Heart right ventricle (tissue), 16 donors: ENCODE measurements at regions of chr6 and their contacts with region 1.

Region 1: DNA sequence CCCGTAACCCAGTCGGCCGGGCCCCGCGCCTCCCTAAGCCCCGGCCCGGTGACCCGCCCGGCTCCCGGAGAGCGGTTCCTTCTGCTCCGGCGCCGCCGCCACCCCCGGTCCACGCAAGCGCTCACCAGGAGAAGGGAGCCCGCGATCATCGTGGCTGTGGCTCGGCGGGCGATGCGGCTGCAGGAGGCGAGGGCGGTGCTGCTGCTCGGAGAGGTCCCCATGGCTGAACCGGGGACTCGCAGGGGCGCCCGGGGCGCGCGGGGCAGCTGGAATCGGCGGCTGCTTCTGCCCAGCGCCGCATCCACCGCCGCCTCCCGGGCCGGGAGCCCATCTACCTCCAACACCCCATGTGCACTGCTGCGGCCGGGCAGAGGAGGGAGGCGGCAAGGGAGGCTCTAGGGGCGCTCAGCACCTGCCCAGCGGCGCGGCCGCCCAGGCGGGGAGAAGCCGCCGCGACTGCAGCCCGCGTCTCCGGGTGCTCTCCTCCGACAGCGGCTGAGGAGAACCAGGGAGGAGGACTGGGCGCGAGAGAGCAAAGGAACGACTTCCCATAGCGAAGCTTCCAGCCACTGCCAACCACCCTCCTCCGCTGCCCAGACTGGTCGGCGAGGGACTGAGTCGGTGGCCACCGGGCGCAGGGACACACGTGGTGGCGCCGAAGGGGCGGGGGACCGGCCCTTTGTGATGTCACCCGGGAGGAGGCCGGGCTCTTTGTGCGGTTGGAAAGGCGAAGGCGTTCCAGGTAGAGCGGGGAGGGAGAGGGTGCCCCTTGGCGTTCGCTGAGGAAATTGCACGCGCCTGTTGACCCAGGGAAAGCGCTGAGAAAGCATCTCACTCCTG is at the start of gene TNFRSF21:
- DNase-seq: peak; percentile 90 to 92
- ATAC-seq: peak; percentile 98 to 100 (median 99)
- H3K4me3 ChIP-seq: peak within 1 kb of the TSS; percentile 56 to 83 (median 78)
- H3K27ac ChIP-seq: peak within 1 kb of the TSS; percentile 22 to 81 (median 73)
- H3K4me1 ChIP-seq: peaks cover 0 to 25% (median 10%) of the 10 kb centered on the region in 9 donors
- H3K27me3 ChIP-seq: peaks cover 0 to 61% (median 40%) of the 10 kb centered on the region in 7 donors
- CTCF ChIP-seq: peak; percentile 83 to 99 (median 95)
- total RNA-seq, gene TNFRSF21: 3.8 to 12.8 (median 6.0) TPM

Region 2: DNA sequence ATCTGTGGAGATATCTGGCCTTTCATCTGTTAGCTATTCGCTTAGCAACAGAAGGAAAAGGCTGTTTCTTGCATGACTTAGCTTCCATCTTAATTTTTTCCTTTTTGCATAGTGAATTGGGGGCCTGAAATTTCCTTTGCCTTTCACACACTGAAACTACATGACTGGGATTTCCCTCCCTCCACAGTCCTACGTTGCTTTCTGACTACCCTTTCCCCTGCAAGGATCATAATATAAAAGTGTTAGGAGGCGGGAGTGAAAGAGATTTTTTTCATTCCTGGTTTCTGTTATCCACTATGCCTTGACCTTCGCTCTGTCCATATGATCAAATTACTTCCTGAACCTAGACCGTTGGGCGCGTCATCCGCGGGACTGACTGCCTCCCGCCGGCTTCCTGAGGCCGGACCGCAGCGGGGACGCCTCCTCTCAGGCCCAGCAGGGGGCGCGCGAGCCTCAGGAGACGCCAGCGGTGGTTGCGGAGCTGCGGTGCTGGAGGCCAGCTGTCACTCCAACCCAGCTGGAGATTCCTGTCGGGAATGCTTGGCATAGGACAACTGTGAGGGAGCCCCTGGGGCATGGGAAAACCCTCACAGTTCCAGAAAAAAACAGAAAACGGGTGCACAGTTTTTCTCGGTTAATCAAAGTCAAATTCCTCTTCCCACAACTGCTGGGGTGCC is 460.7 kb before region 1 on chr6:
- intact Hi-C with region 1: loop called in 6 of 10 experiments (anchors 5 to 10 kb)
- DNase-seq: peak; percentile 83 to 88
- ATAC-seq: peak; percentile 90 to 97 (median 94)
- H3K4me3 ChIP-seq: peak overlapping the region in 4 of 10 donors; percentile 17 to 32 (median 22)
- H3K27ac ChIP-seq: peak overlapping the region in 2 of 10 donors; percentile 21 to 51
- H3K4me1 ChIP-seq: peaks cover 4 to 54% (median 38%) of the 10 kb centered on the region in 9 donors
- H3K27me3 ChIP-seq: no peaks in the 10 kb centered on the region
- CTCF ChIP-seq: peak; percentile 93 to 99 (median 99)

Region 3: GRCh38 chr6:47009566-47009965 is 299.9 kb before region 1 on chr6:
- intact Hi-C with region 1: loop called in 1 of 10 experiments (anchors 5 kb)
- DNase-seq: no peak
- ATAC-seq: no peak
- H3K4me3 ChIP-seq: no peak overlapping the region
- H3K27ac ChIP-seq: no peak overlapping the region
- H3K4me1 ChIP-seq: no peaks in the 10 kb centered on the region
- H3K27me3 ChIP-seq: peaks cover 0 to 12% (median 0%) of the 10 kb centered on the region in 7 donors
- CTCF ChIP-seq: peak in 4 of 9 donors; percentile 9 to 43 (median 24)

Region 4: GRCh38 chr6:47242483-47243386 is 66.8 kb before region 1 on chr6:
- intact Hi-C with region 1: loop called in 3 of 10 experiments (anchors 5 to 10 kb)
- DNase-seq: peak; percentile 86 to 88
- ATAC-seq: peak; percentile 89 to 99 (median 95)
- H3K4me3 ChIP-seq: no peak overlapping the region
- H3K27ac ChIP-seq: peak overlapping the region in 6 of 10 donors; percentile 26 to 59 (median 44)
- H3K4me1 ChIP-seq: peaks cover 0 to 58% (median 34%) of the 10 kb centered on the region in 9 donors
- H3K27me3 ChIP-seq: no peaks in the 10 kb centered on the region
- CTCF ChIP-seq: no peak

Region 5: DNA sequence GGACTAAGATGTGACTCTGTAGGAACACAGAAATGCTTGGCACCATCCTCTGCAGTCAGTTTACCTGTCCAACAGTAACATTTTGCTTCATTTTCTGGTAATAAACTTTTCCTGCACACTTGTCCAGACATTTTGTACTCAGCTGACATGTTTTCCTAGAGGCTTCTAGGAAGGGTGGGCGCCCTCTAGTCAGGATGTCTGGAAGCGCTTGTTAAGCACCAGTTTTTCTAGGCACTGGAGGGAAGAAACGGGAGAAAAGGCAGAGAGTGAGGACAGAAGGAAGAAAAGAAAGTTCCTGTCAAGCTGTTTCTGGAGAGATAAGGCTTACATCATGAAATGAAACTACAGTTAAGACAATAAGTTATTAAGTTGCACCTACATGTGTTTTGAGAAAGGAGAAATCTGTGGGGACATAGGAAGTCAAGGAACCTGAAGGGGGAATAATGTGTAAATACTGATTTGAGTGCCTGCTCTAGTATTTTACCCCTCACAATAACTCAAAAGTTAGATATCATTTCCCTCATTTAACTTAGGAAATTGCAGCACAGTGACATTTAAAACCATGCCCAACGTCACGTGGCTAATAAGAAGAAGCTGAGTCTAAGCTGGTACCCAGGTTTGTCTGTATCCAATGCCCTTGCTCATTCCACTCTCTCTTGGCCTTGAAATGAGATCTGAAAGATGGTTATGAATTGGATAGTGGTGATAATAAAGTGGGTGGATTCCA is 42.8 kb after region 1 on chr6:
- intact Hi-C with region 1: no loop called
- DNase-seq: no peak
- ATAC-seq: no peak
- H3K4me3 ChIP-seq: no peak overlapping the region
- H3K27ac ChIP-seq: no peak overlapping the region
- H3K4me1 ChIP-seq: peaks cover 0 to 24% (median 0%) of the 10 kb centered on the region in 9 donors
- H3K27me3 ChIP-seq: peaks cover 0 to 4% (median 0%) of the 10 kb centered on the region in 7 donors
- CTCF ChIP-seq: no peak